Activated B cell treated with CpG ODN at 0.5 μM for 24 hours (primary cell): ENCODE measurements at regions of chr6 and their contacts with region 1.

Region 1: DNA sequence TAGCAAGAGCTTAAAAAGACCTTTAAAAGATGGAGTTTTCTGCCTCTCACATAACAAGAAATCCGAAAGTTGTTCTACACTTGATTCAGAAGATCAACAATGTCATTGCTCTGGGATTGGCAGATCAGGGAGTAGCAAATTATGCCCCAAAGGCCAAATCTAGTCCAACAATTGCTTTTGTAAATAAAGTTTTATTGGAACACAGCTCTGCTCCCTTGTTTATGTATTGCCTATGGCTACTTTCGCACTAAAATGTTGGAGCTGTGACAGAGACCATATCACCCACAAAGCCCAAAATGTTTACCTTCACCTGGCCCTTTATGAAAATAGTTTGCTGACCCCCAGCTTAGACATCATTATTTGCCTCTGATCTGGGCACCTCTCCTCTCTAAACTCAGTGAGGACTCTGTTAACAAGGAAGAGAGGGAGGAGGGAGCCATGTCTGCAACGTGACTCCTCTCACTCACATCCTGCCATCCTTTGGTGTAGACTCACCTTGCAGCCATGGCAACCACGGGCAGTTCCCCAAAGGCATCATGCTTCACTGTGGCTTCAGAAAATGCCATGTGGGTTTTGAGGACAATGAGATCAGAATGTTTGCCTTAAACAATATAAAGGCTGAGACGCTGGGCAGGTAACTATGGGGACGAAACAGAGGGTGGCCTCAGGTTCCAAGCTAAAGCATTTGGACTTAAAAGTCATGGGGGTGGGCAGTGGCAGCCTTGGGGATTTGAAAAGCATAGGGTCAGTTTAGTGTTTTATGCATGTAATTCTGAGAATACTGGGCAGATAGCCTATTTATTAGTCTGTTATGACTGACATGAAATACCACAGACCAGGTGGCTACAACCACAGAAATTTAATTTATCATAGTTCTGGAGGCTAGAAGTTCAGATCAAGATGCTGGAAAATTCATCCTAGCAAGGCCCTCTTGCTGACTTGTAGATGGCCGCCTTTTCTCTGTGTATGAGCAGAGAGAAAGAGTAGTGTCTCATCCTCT is 149.7 kb upstream of the TNFAIP3 start:
- DNase-seq: no peak
- ATAC-seq: no peak
- H3K4me3 Mint-ChIP-seq: no peak overlapping the region
- H3K27ac Mint-ChIP-seq: no peak overlapping the region
- H3K4me1 Mint-ChIP-seq: no peaks in the 10 kb centered on the region
- H3K27me3 Mint-ChIP-seq: no peaks in the 10 kb centered on the region
- CTCF ChIP-seq: no peak

Region 2: DNA sequence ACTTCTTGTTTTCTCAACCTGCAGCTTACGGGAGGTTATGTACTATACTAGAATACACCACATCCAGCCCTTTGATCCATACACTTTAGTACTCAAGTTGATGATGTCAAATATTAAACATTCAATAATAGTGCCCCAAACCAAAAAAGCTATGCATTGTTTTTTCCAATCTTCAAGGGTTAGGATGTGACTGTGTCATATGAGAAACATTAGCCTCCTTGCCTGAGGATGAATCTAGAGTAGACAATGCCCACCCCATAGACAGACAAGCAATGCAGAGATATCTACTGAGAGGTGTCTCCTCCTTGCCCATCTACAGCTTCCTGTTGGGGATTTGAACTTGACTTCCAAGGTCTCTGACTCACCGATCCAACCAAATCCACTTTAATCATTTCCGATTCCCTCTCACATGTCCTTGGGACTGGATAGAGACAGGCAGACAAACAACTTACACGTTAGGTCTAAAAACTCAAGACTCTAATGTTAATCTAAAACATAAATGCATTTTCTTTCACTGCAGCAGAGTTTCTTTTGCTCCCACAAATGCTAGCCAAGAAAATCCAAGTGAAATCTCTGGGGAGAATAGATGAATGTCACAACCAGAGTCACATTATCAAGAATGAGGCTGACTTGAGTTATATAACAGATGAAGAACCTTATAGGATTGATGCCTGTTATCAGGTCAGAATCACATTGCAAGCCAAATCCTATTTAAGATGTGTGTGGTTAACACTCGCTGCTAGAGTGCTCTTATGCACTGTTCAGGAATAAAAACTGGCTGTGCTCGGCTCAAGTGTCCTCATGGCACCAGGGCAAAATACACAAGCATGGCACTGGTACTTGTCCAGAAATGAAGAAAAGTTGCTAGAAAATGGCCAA is 74.1 kb after region 1 on chr6:
- CTCF ChIA-PET with region 1: no interaction called
- POLR2A ChIA-PET with region 1: interaction called, 3 read pairs
- intact Hi-C with region 1: loop called (anchors 2 kb)
- DNase-seq: no peak
- ATAC-seq: no peak
- H3K4me3 Mint-ChIP-seq: no peak overlapping the region
- H3K27ac Mint-ChIP-seq: peak overlapping the region; percentile 68
- H3K4me1 Mint-ChIP-seq: peaks cover 42% of the 10 kb centered on the region
- H3K27me3 Mint-ChIP-seq: no peaks in the 10 kb centered on the region
- CTCF ChIP-seq: no peak